Activated CD8-positive, alpha-beta T cell treated with anti-CD3 and anti-CD28 coated beads for 36 hours (primary cell): ENCODE measurements at regions of chr12 and their contacts with region 1.

Region 1: DNA sequence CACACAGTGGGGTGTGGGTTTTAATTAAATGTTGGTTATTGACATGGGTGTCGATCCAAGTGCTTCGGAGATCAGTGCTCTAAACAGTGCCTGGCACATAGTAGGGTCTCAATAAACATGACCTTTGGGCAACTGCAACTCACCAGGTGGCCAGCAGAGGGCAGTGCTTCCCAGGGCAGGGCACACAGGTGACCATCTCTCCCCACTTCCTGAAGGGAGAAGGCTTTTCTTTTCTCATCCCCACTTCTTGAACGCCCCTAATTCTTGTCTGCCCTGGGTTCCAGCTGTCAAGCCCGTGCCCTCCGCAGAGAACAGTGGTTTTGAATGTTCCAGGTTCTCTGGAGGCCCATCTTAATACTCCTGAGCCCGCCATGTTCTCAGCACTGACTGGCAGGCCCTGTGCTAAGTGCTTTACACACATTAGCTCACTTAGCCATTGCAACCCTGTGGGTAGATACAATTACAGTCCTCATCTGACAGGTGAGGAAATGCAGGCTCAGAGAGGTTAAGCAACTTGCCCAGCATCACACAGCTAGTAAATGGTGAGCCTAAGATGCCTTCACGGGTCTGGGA is 16.3 kb downstream of the RAPGEF3 start:
- DNase-seq: peak; percentile 84
- ATAC-seq: peak; percentile 67
- H3K4me3 Mint-ChIP-seq: no peak overlapping the region
- H3K27ac Mint-ChIP-seq: no peak overlapping the region
- H3K4me1 Mint-ChIP-seq: peaks cover 26% of the 10 kb centered on the region
- H3K27me3 Mint-ChIP-seq: no peaks in the 10 kb centered on the region
- CTCF ChIP-seq: peak; percentile 100

Region 2: GRCh38 chr12:47715393-47715876 is 26.9 kb before region 1 on chr12:
- CTCF ChIA-PET with region 1: interaction called, 134 read pairs
- POLR2A ChIA-PET with region 1: no interaction called
- intact Hi-C with region 1: no loop called
- DNase-seq: peak; percentile 91
- ATAC-seq: peak; percentile 88
- H3K4me3 Mint-ChIP-seq: no peak overlapping the region
- H3K27ac Mint-ChIP-seq: no peak overlapping the region
- H3K4me1 Mint-ChIP-seq: peaks cover 19% of the 10 kb centered on the region
- H3K27me3 Mint-ChIP-seq: no peaks in the 10 kb centered on the region
- CTCF ChIP-seq: peak; percentile 71

Region 3: GRCh38 chr12:47767216-47767724 is 24.9 kb after region 1 on chr12:
- CTCF ChIA-PET with region 1: interaction called, 685 read pairs
- POLR2A ChIA-PET with region 1: interaction called, 15 read pairs
- intact Hi-C with region 1: loop called (anchors 2 kb)
- DNase-seq: peak; percentile 77
- ATAC-seq: peak; percentile 80
- H3K4me3 Mint-ChIP-seq: no peak overlapping the region
- H3K27ac Mint-ChIP-seq: no peak overlapping the region
- H3K4me1 Mint-ChIP-seq: peaks cover 13% of the 10 kb centered on the region
- H3K27me3 Mint-ChIP-seq: no peaks in the 10 kb centered on the region
- CTCF ChIP-seq: peak; percentile 89

Region 4: GRCh38 chr12:47797441-47797840 is 55.1 kb after region 1 on chr12:
- CTCF ChIA-PET with region 1: interaction called, 28 read pairs
- POLR2A ChIA-PET with region 1: interaction called, 4 read pairs
- intact Hi-C with region 1: no loop called
- DNase-seq: peak; percentile 56
- ATAC-seq: peak; percentile 57
- H3K4me3 Mint-ChIP-seq: no peak overlapping the region
- H3K27ac Mint-ChIP-seq: peak overlapping the region; percentile 46
- H3K4me1 Mint-ChIP-seq: peaks cover 41% of the 10 kb centered on the region
- H3K27me3 Mint-ChIP-seq: no peaks in the 10 kb centered on the region
- CTCF ChIP-seq: peak; percentile 19

Region 5: DNA sequence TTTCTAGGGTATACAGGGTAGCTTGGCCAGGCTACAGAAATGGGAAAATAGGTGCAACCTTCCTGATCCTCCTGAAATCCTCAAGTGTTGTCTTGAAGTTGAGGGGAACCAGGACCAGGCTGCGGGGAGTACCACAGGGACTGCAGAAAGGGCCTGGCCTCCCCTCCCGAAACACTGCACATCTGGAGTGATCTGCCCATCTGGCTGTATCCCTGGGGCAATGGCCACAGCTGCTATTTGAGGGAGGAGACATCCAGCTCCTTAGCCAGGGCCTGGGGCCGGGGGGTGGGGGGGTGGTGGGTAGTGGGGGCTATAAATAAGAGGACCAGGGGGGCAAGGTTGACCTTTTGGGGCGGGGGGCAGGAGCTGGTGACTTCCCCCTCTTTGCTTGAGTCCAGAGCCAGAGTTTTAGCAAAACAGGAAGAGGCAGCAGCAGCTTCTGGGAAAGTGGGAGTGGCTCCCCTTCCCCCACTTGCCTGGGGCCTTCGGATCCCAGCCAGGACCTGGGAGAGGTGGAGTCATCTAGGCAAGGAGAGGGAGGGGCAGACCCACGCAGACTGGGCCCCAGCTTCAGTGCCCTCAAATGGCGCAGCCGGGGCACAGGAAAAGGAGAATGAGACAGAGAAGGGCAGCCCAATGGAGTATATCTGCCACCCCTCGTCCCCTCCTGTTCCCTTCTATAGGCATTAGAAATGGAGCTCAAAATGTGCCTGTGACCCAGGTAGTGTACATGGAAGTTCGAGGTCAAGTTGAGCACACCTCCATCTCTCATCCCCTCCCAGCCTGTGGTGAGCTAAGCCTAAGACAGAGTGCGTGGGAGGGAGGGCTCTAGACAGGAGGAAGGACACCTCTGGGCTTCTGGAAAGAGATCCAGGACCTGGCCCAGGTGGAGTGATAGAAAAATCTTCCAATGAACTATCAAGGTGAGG is 86.5 kb after region 1 on chr12:
- CTCF ChIA-PET with region 1: interaction called, 286 read pairs
- POLR2A ChIA-PET with region 1: no interaction called
- intact Hi-C with region 1: no loop called
- DNase-seq: no peak
- ATAC-seq: no peak
- H3K4me3 Mint-ChIP-seq: peak overlapping the region; percentile 56
- H3K27ac Mint-ChIP-seq: peak overlapping the region; percentile 84
- H3K4me1 Mint-ChIP-seq: peaks cover 89% of the 10 kb centered on the region
- H3K27me3 Mint-ChIP-seq: no peaks in the 10 kb centered on the region
- CTCF ChIP-seq: no peak

Region 6: DNA sequence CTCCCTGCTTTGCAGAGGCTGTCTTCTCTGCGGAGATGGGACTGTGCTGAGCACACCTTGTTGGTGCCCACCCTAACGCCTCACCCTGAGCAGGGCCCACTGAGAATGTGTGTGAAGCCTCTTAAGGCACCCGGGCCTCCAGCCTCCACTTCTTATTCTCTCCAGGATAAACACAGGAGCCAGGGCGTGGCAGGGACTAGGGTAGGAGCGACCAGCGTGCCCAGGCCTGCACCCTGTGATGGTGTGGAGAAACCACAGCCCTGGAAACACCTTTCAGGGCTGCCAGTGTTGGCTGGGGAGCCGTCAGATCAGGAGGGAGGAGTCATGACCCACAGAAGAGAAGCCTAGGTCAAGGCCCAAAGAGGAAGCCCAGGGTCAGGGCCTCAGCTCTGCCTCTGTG is 121.1 kb after region 1 on chr12:
- CTCF ChIA-PET with region 1: interaction called, 11 read pairs
- POLR2A ChIA-PET with region 1: no interaction called
- intact Hi-C with region 1: no loop called
- DNase-seq: no peak
- ATAC-seq: no peak
- H3K4me3 Mint-ChIP-seq: no peak overlapping the region
- H3K27ac Mint-ChIP-seq: peak overlapping the region; percentile 25
- H3K4me1 Mint-ChIP-seq: peaks cover 72% of the 10 kb centered on the region
- H3K27me3 Mint-ChIP-seq: no peaks in the 10 kb centered on the region
- CTCF ChIP-seq: no peak

Region 7: DNA sequence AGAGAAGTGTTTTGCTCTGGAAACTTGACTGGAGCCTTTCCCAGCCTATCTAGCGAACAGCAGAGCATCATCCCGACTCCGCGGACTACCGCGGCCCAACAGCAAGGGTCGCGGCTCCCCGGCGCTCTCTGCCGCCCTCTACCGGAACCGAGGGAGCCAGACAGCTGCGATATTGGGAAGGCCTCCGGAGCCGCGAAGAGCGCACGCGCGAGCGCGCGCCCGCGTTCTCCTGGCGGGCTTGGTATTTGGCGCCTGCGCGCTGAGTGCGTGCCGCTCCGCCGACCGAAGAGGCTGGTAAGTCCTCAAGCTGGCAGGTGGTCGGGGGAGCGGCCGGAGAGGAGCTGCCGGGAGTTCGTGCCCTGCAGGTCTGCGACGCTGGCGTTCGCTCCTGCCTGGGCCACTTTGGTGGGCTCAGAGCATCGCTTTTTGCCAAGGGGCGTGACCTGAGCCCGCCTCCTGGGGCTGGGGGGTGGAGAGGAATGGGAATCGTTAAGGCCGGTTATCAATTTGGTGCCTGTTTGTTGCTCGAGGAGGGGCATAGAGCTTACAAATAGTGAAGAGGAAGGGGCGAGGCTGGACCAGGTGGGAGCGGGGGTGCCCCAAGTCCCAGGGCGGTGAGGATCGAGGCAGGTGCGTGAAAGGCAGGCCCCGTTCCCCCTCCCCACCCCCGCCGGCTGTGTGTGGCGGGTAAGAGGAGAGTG is 221.2 kb after region 1 on chr12 and contains the start of gene TMEM106C:
- CTCF ChIA-PET with region 1: interaction called, 23 read pairs
- POLR2A ChIA-PET with region 1: no interaction called
- intact Hi-C with region 1: no loop called
- DNase-seq: peak; percentile 94
- ATAC-seq: peak; percentile 98
- H3K4me3 Mint-ChIP-seq: peak within 1 kb of the TSS; percentile 99
- H3K27ac Mint-ChIP-seq: peak within 1 kb of the TSS; percentile 86
- H3K4me1 Mint-ChIP-seq: peaks cover 28% of the 10 kb centered on the region
- H3K27me3 Mint-ChIP-seq: peaks cover 1% of the 10 kb centered on the region
- CTCF ChIP-seq: peak; percentile 92
- total RNA-seq, gene TMEM106C: 148 to 158 TPM